Naive thymus-derived CD4-positive, alpha-beta T cell (primary cell): ENCODE measurements at regions of chr14 and their contacts with region 1.

Region 1: GRCh38 chr14:101809671-101810514 is 48.4 kb downstream of the PPP2R5C start:
- DNase-seq: peak; percentile 57 to 97 (median 95)
- ATAC-seq: peak; percentile 94
- H3K4me3 ChIP-seq: peak overlapping the region; percentile 92
- H3K4me3 Mint-ChIP-seq: peak overlapping the region; percentile 94 to 98 (median 96)
- H3K27ac ChIP-seq: peak overlapping the region; percentile 99
- H3K27ac Mint-ChIP-seq: peak overlapping the region; percentile 90 to 100 (median 99)
- H3K4me1 ChIP-seq: peaks cover 36 to 38% of the 10 kb centered on the region in 2 donors
- H3K4me1 Mint-ChIP-seq: peaks cover 27 to 62% (median 55%) of the 10 kb centered on the region in 7 donors
- H3K27me3 ChIP-seq: no peaks in the 10 kb centered on the region
- H3K27me3 Mint-ChIP-seq: no peaks in the 10 kb centered on the region

Region 2: GRCh38 chr14:101767618-101768362 is 42.1 kb before region 1 on chr14:
- CTCF ChIA-PET with region 1: interaction called, 11 read pairs
- POLR2A ChIA-PET with region 1: interaction called, 25 read pairs
- intact Hi-C with region 1: loop called in 1 of 2 experiments (anchors 2 kb)
- DNase-seq: no peak
- ATAC-seq: no peak
- H3K4me3 ChIP-seq: no peak overlapping the region
- H3K4me3 Mint-ChIP-seq: no peak overlapping the region
- H3K27ac ChIP-seq: no peak overlapping the region
- H3K27ac Mint-ChIP-seq: peak overlapping the region in 3 of 9 donors; percentile 2 to 43 (median 6)
- H3K4me1 ChIP-seq: peaks cover 9 to 11% of the 10 kb centered on the region in 2 donors
- H3K4me1 Mint-ChIP-seq: peaks cover 28 to 52% (median 38%) of the 10 kb centered on the region in 7 donors
- H3K27me3 ChIP-seq: no peaks in the 10 kb centered on the region
- H3K27me3 Mint-ChIP-seq: no peaks in the 10 kb centered on the region

Region 3: GRCh38 chr14:101774006-101774795 is 35.7 kb before region 1 on chr14:
- CTCF ChIA-PET with region 1: interaction called, 11 read pairs
- POLR2A ChIA-PET with region 1: interaction called, 16 read pairs
- intact Hi-C with region 1: loop called in 1 of 2 experiments (anchors 2 kb)
- DNase-seq: no peak
- ATAC-seq: no peak
- H3K4me3 ChIP-seq: no peak overlapping the region
- H3K4me3 Mint-ChIP-seq: no peak overlapping the region
- H3K27ac ChIP-seq: no peak overlapping the region
- H3K27ac Mint-ChIP-seq: peak overlapping the region in 6 of 9 donors; percentile 14 to 70 (median 28)
- H3K4me1 ChIP-seq: no peaks in the 10 kb centered on the region
- H3K4me1 Mint-ChIP-seq: peaks cover 18 to 41% (median 35%) of the 10 kb centered on the region in 7 donors
- H3K27me3 ChIP-seq: no peaks in the 10 kb centered on the region
- H3K27me3 Mint-ChIP-seq: peaks cover 0 to 8% (median 0%) of the 10 kb centered on the region in 5 donors

Region 4: DNA sequence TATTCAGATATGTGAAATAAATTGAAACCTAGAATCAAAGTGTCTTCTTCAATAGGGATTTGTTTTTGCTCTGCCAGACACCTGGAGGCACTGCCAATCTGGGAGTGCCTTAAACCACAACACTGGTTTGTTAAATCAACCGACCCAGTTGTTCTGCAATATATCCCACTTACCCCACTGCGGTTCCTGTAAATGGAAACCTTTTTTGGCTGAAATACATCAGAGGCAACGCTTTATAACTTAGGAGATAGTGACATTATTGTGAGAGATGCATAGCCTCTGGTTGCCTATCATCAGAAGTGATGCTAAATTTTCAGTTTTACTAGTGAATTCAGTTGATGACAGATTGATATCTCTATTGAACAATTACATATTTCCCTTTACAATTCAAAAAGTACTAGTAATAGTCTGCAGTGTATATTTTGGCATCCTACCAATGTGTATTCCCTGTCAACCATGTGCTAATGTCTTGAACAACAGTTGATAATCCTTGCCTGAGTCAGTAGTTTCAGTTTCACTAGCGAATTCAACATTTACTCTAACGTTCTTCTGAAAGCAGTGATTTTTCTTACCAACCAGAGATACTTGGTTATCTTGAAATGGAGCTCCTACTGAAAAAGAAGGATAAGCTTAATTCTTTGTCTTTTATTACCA is 17.8 kb before region 1 on chr14:
- CTCF ChIA-PET with region 1: interaction called, 4 read pairs
- POLR2A ChIA-PET with region 1: interaction called, 32 read pairs
- intact Hi-C with region 1: loop called (anchors 1 kb)
- DNase-seq: peak in 4 of 9 donors; percentile 38 to 54 (median 50)
- ATAC-seq: peak; percentile 67
- H3K4me3 ChIP-seq: peak overlapping the region; percentile 36
- H3K4me3 Mint-ChIP-seq: peak overlapping the region; percentile 39 to 85 (median 77)
- H3K27ac ChIP-seq: peak overlapping the region; percentile 70
- H3K27ac Mint-ChIP-seq: peak overlapping the region; percentile 76 to 93 (median 86)
- H3K4me1 ChIP-seq: peaks cover 3 to 9% of the 10 kb centered on the region in 2 donors
- H3K4me1 Mint-ChIP-seq: peaks cover 12 to 42% (median 27%) of the 10 kb centered on the region in 7 donors
- H3K27me3 ChIP-seq: no peaks in the 10 kb centered on the region
- H3K27me3 Mint-ChIP-seq: no peaks in the 10 kb centered on the region

Region 5: GRCh38 chr14:101834800-101835547 is 25.1 kb after region 1 on chr14:
- CTCF ChIA-PET with region 1: interaction called, 14 read pairs
- POLR2A ChIA-PET with region 1: interaction called, 27 read pairs
- intact Hi-C with region 1: no loop called
- DNase-seq: no peak
- ATAC-seq: no peak
- H3K4me3 ChIP-seq: no peak overlapping the region
- H3K4me3 Mint-ChIP-seq: peak overlapping the region in 5 of 10 donors; percentile 21 to 56 (median 42)
- H3K27ac ChIP-seq: peak overlapping the region; percentile 38
- H3K27ac Mint-ChIP-seq: peak overlapping the region in 8 of 9 donors; percentile 36 to 85 (median 64)
- H3K4me1 ChIP-seq: peaks cover 62 to 92% of the 10 kb centered on the region in 2 donors
- H3K4me1 Mint-ChIP-seq: peaks cover 67 to 97% (median 86%) of the 10 kb centered on the region in 7 donors
- H3K27me3 ChIP-seq: no peaks in the 10 kb centered on the region
- H3K27me3 Mint-ChIP-seq: no peaks in the 10 kb centered on the region